Posterior vena cava (tissue), 2 donors: ENCODE measurements at regions of chr18 and their contacts with region 1.

Region 1: GRCh38 chr18:46452820-46453219 is 204.2 kb downstream of the LOXHD1 start:
- DNase-seq: no peak

Region 2: GRCh38 chr18:46431522-46432171 is 21.2 kb before region 1 on chr18:
- intact Hi-C with region 1: loop called in 1 of 2 experiments (anchors 2 kb)
- DNase-seq: peak; percentile 16